ENCODE measurements at regions of chr14 and their contacts with region 1.

Region 1: DNA sequence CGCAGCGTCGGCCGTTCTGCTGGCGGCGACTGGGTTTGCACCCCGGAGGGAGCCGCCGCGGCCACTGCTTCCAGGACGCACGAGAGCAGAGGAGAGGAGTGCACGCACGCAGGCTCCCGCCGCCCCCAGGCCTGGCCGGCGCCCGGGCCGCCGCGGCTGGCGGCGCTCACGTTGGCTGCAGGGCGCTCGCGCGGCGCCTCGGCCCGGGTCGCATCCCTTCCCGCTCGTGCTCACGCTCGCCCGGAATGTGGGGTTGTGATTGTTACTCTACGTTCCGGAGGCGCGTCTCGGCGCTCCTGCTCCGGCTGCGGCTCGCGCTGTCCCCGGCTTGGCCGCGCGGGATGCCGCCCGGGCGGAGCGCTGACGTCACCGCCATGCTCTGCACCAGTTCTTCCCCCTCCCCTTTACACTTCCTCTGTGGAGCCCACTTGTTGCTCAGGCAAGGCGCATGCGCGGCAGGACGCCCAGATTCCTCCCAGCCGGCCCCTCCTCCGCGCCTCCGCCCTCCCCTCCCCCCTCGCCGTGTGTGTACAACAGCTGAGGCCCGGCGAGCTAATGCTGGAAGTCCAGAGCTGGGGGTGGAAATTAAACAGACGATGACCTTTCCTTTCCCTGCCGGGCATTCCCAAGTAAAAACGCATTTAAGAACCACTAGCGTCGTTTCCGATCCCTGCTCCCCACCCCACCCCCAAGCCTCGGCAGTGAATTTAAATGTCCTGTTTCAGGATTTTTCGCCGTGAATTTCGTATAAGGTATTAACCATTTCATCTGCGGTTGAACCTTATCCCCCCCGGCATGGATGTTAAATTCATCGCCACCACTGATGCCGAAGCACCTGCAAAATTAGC is at the start of gene IRF2BPL:
- DNase-seq: peak; percentile 99
- H3K4me3 ChIP-seq: peak within 1 kb of the TSS; percentile 79 to 93 (median 86)
- H3K27ac ChIP-seq: peak within 1 kb of the TSS; percentile 98 to 100 (median 100)
- H3K4me1 ChIP-seq: peaks cover 65 to 80% (median 78%) of the 10 kb centered on the region in 4 donors
- H3K27me3 ChIP-seq: no peaks in the 10 kb centered on the region
- CTCF ChIP-seq: no peak
- EP300 ChIP-seq: peak; percentile 80
- POLR2A ChIP-seq: peak; percentile 88
- total RNA-seq, gene IRF2BPL: 58.6 to 105 (median 98.4) TPM

Region 2: GRCh38 chr14:76956316-76957090 is 72.1 kb before region 1 on chr14:
- intact Hi-C with region 1: loop called (anchors 5 kb)
- DNase-seq: peak; percentile 96
- H3K4me3 ChIP-seq: peak overlapping the region; percentile 51 to 58 (median 52)
- H3K27ac ChIP-seq: peak overlapping the region; percentile 91 to 97 (median 93)
- H3K4me1 ChIP-seq: peaks cover 62 to 86% (median 80%) of the 10 kb centered on the region in 4 donors
- H3K27me3 ChIP-seq: no peaks in the 10 kb centered on the region
- CTCF ChIP-seq: peak in 2 of 3 experiments; percentile 23 to 28
- EP300 ChIP-seq: no peak
- POLR2A ChIP-seq: no peak